ENCODE measurements at regions of chr1 and their contacts with region 1.

Region 1: GRCh38 chr1:96721416-96722160 is at the start of gene PTBP2:
- DNase-seq: peak; percentile 69
- ATAC-seq: peak; percentile 96
- H3K4me3 ChIP-seq: peak within 1 kb of the TSS; percentile 96
- H3K27ac ChIP-seq: peak within 1 kb of the TSS; percentile 96
- H3K4me1 ChIP-seq: no peaks in the 10 kb centered on the region; the same call in 1 of the 2 replicates
- H3K27me3 ChIP-seq: no peaks in the 10 kb centered on the region
- CTCF ChIP-seq: no peak
- POLR2A ChIP-seq: peak; percentile 74; the same call in 1 of the 2 replicates
- RAD21 ChIP-seq: no peak
- total RNA-seq, gene PTBP2: 37.8 and 38.6 TPM in 2 replicates

Region 2: DNA sequence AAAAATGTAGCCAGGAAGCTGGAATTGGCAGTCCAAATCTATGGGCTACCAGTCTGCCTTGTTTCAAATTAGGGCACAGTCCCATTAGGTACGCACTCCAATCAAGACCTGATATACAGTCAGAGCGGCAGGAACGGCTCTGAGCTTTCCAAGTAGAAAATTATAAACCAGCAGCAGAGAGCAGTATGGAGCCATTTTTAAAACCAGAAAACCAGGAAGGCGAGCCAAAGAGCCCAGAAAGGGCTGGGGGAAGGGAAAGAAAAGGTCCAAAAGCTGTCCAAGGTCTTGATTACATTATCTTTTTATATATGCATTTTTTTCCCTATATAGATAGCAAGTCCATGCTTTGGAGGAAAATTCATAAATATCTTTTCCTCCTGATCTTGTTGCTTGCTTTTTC is 768.6 kb before region 1 on chr1:
- CTCF ChIA-PET with region 1: no interaction called
- POLR2A ChIA-PET with region 1: no interaction called
- dilution Hi-C with region 1: no loop called
- in situ Hi-C with region 1: no loop called
- intact Hi-C with region 1: loop called (anchors 10 kb)
- DNase-seq: peak; percentile 1
- ATAC-seq: peak; percentile 49; the same call in 1 of the 2 replicates
- H3K4me3 ChIP-seq: no peak overlapping the region
- H3K27ac ChIP-seq: no peak overlapping the region
- H3K4me1 ChIP-seq: no peaks in the 10 kb centered on the region
- H3K27me3 ChIP-seq: no peaks in the 10 kb centered on the region
- CTCF ChIP-seq: 0 out of 2 replicates have a peak, but pooled peaks have one; percentile 10
- POLR2A ChIP-seq: no peak
- RAD21 ChIP-seq: peak; percentile 7; the same call in 1 of the 2 replicates

Region 3: DNA sequence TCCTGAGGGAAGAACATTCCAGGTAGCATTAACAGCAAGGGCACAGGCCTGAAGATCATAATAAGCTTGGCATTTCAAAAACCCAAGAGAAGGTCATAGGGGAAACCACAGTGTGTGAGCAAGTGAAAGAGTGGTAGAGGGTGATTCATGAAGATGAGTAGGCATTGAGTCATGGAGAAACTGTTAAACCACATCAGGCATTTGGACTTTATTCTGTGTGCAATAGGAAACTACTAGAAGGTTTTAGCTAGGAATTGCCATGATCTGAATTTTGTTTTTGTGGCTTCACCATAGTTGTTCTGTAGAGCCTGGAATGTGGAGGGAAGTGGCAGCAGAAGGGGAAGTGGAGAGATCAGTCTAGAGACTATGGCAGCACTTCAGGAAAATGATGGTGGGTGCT is 359.0 kb before region 1 on chr1:
- CTCF ChIA-PET with region 1: no interaction called
- POLR2A ChIA-PET with region 1: no interaction called
- dilution Hi-C with region 1: no loop called
- in situ Hi-C with region 1: no loop called
- intact Hi-C with region 1: loop called (anchors 2 kb)
- DNase-seq: peak; percentile 99
- ATAC-seq: peak; percentile 85
- H3K4me3 ChIP-seq: no peak overlapping the region
- H3K27ac ChIP-seq: peak overlapping the region; percentile 65
- H3K4me1 ChIP-seq: peaks cover 24% of the 10 kb centered on the region
- H3K27me3 ChIP-seq: no peaks in the 10 kb centered on the region
- CTCF ChIP-seq: no peak
- POLR2A ChIP-seq: no peak
- RAD21 ChIP-seq: 0 out of 2 replicates have a peak, but pooled peaks have one; percentile 18

Region 4: DNA sequence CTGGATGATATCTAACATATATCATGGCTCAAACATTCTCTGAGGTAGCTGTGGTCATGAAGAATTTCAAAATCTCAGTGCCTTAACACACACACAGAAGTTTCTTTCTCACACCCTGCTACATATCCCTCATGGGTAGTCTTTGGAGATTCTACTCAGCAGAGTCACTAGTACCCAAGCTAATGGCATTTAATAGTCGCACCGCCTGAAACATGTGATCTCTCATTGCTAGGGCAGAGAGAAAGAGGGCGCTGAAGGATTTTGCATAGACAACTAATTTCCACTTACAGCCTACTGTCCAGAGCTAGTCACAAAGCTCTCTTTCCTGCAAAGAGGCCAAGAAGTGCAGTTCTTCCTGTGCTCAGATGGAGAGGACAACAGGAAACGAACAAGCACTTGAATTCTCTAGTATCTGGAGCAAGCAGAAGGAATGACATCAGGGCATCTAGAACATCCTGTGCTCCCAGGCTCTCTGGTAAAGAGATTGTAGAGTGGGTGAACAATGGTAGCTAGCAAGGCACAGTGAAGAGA is 183.4 kb before region 1 on chr1:
- CTCF ChIA-PET with region 1: no interaction called
- POLR2A ChIA-PET with region 1: interaction called, 7 read pairs
- dilution Hi-C with region 1: no loop called
- in situ Hi-C with region 1: no loop called
- intact Hi-C with region 1: loop called (anchors 2 kb)
- DNase-seq: peak; percentile 68
- ATAC-seq: peak; percentile 58
- H3K4me3 ChIP-seq: no peak overlapping the region
- H3K27ac ChIP-seq: peak overlapping the region; percentile 64; the same call in 1 of the 2 replicates
- H3K4me1 ChIP-seq: peaks cover 8% of the 10 kb centered on the region
- H3K27me3 ChIP-seq: no peaks in the 10 kb centered on the region
- CTCF ChIP-seq: no peak
- POLR2A ChIP-seq: no peak
- RAD21 ChIP-seq: no peak

Region 5: GRCh38 chr1:96674911-96675310 is 46.7 kb before region 1 on chr1:
- CTCF ChIA-PET with region 1: no interaction called
- POLR2A ChIA-PET with region 1: interaction called, 16 read pairs
- dilution Hi-C with region 1: no loop called
- in situ Hi-C with region 1: no loop called
- intact Hi-C with region 1: no loop called
- DNase-seq: no peak
- ATAC-seq: no peak
- H3K4me3 ChIP-seq: no peak overlapping the region
- H3K27ac ChIP-seq: no peak overlapping the region
- H3K4me1 ChIP-seq: no peaks in the 10 kb centered on the region
- H3K27me3 ChIP-seq: no peaks in the 10 kb centered on the region
- CTCF ChIP-seq: no peak
- POLR2A ChIP-seq: no peak
- RAD21 ChIP-seq: no peak